ENCODE measurements at regions of chr1 and their contacts with region 1.

Region 1: GRCh38 chr1:40404670-40405462 is 31.3 kb downstream of the SMAP2 start:
- DNase-seq: peak in 5 of 9 experiments; percentile 45 to 88 (median 59)
- ATAC-seq: peak; percentile 81
- H3K4me3 ChIP-seq: no peak overlapping the region
- H3K4me3 Mint-ChIP-seq: peak overlapping the region; percentile 55
- H3K27ac ChIP-seq: peak overlapping the region; percentile 59 to 84
- H3K27ac Mint-ChIP-seq: peak overlapping the region; percentile 96
- H3K4me1 ChIP-seq: peaks cover 56% of the 10 kb centered on the region
- H3K4me1 Mint-ChIP-seq: peaks cover 77% of the 10 kb centered on the region
- H3K27me3 ChIP-seq: no peaks in the 10 kb centered on the region
- H3K27me3 Mint-ChIP-seq: no peaks in the 10 kb centered on the region
- CTCF ChIP-seq: peak; percentile 79

Region 2: GRCh38 chr1:40078512-40079333 is 326.1 kb before region 1 on chr1:
- CTCF ChIA-PET with region 1: interaction called, 6 read pairs
- POLR2A ChIA-PET with region 1: no interaction called
- intact Hi-C with region 1: loop called in 1 of 2 experiments (anchors 2 kb)
- DNase-seq: peak in 8 of 9 experiments; percentile 13 to 77 (median 50)
- ATAC-seq: peak; percentile 89
- H3K4me3 ChIP-seq: no peak overlapping the region
- H3K4me3 Mint-ChIP-seq: no peak overlapping the region
- H3K27ac ChIP-seq: no peak overlapping the region
- H3K27ac Mint-ChIP-seq: peak overlapping the region; percentile 56
- H3K4me1 ChIP-seq: peaks cover 4% of the 10 kb centered on the region
- H3K4me1 Mint-ChIP-seq: peaks cover 11% of the 10 kb centered on the region
- H3K27me3 ChIP-seq: no peaks in the 10 kb centered on the region
- H3K27me3 Mint-ChIP-seq: no peaks in the 10 kb centered on the region
- CTCF ChIP-seq: peak; percentile 88

Region 3: GRCh38 chr1:40153073-40153770 is 251.6 kb before region 1 on chr1:
- CTCF ChIA-PET with region 1: interaction called, 51 read pairs
- POLR2A ChIA-PET with region 1: no interaction called
- intact Hi-C with region 1: loop called (anchors 1 kb)
- DNase-seq: peak in 5 of 9 experiments; percentile 5 to 84 (median 37)
- ATAC-seq: peak; percentile 88
- H3K4me3 ChIP-seq: no peak overlapping the region
- H3K4me3 Mint-ChIP-seq: peak overlapping the region; percentile 20
- H3K27ac ChIP-seq: no peak overlapping the region
- H3K27ac Mint-ChIP-seq: peak overlapping the region; percentile 65
- H3K4me1 ChIP-seq: no peaks in the 10 kb centered on the region
- H3K4me1 Mint-ChIP-seq: peaks cover 9% of the 10 kb centered on the region
- H3K27me3 ChIP-seq: no peaks in the 10 kb centered on the region
- H3K27me3 Mint-ChIP-seq: no peaks in the 10 kb centered on the region
- CTCF ChIP-seq: peak; percentile 76

Region 4: GRCh38 chr1:40281853-40282252 is 123.0 kb before region 1 on chr1:
- CTCF ChIA-PET with region 1: interaction called, 5 read pairs
- POLR2A ChIA-PET with region 1: no interaction called
- intact Hi-C with region 1: loop called in 1 of 2 experiments (anchors 5 kb)
- DNase-seq: no peak
- ATAC-seq: no peak
- H3K4me3 ChIP-seq: no peak overlapping the region
- H3K4me3 Mint-ChIP-seq: no peak overlapping the region
- H3K27ac ChIP-seq: no peak overlapping the region
- H3K27ac Mint-ChIP-seq: no peak overlapping the region
- H3K4me1 ChIP-seq: no peaks in the 10 kb centered on the region
- H3K4me1 Mint-ChIP-seq: no peaks in the 10 kb centered on the region
- H3K27me3 ChIP-seq: no peaks in the 10 kb centered on the region
- H3K27me3 Mint-ChIP-seq: no peaks in the 10 kb centered on the region
- CTCF ChIP-seq: no peak

Region 5: DNA sequence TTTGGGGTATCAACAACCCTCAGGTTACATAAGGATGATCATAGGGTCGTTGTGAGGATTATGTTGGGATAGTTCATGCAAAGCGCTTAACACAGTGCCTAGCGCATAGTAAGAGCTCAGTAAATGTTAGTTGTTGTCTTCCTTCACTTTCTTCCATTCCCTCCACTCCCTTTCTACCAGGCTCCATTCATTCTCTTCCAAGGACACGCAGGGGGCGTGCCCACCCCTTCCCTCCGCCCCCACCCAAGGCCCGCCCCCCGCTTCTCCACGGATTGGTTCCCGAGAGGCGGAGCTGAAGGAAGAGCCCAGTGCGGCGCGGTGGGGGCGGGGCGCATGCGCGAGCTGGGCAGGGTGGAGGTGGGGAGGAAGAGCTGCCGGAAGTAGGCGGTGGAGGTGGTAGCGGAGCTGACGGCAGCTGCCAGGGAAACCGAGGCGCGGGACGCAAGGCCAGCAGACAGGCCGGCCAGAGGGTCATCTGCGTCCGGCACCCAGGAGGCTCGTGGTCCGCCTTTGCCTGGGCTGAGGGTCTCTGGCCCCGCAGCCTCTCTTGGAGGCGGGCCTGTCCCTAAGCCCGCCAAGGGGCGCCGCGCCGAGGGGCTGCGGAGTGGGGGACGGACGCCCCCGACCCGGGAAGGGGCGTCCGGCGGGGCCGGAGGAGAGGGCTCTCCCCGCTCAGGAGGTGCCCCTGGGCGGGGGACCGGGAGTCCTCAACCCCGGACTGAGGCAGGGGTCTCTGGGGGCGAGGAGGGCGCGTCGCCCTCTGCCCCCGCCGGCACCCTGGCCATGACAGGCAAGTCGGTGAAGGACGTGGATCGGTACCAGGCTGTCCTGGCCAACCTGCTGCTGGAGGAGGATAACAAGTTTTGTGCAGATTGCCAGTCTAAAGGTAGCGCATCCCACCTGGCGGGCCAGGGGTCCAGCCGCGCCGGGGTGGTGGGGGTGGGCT is 31.3 kb before region 1 on chr1 and contains the start of gene SMAP2:
- CTCF ChIA-PET with region 1: interaction called, 5 read pairs
- POLR2A ChIA-PET with region 1: interaction called, 3 read pairs
- intact Hi-C with region 1: loop called (anchors 1 to 5 kb)
- DNase-seq: peak; percentile 91 to 98 (median 95)
- ATAC-seq: peak; percentile 80
- H3K4me3 ChIP-seq: peak within 1 kb of the TSS; percentile 81 to 100
- H3K4me3 Mint-ChIP-seq: peak within 1 kb of the TSS; percentile 100
- H3K27ac ChIP-seq: peak within 1 kb of the TSS; percentile 96 to 97
- H3K27ac Mint-ChIP-seq: peak within 1 kb of the TSS; percentile 99
- H3K4me1 ChIP-seq: peaks cover 35% of the 10 kb centered on the region
- H3K4me1 Mint-ChIP-seq: peaks cover 54% of the 10 kb centered on the region
- H3K27me3 ChIP-seq: no peaks in the 10 kb centered on the region
- H3K27me3 Mint-ChIP-seq: no peaks in the 10 kb centered on the region
- CTCF ChIP-seq: no peak
- total RNA-seq, gene SMAP2: 167 to 171 TPM

Region 6: DNA sequence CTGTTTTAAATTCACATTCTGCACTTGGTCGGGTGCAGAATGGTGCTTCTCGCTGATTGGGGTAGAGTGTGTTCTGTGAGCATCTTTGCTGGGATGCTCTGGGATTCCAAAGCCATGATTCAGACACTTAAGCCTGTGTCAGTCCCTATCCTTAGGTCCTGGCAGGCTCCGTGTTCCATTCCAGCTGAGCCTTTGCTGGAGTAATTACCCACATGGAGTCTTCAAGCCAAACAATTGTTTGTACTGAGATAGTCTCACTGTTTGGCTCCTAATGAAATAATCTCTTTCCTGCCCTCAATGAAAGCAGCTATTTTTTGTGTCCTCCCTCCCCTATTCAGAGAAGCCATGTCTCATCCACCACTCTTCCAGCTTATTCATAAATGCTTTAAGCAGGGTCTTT is 12.6 kb before region 1 on chr1:
- CTCF ChIA-PET with region 1: interaction called, 53 read pairs
- POLR2A ChIA-PET with region 1: interaction called, 13 read pairs
- intact Hi-C with region 1: loop called in 1 of 2 experiments (anchors 1 kb)
- DNase-seq: no peak
- ATAC-seq: no peak
- H3K4me3 ChIP-seq: no peak overlapping the region
- H3K4me3 Mint-ChIP-seq: peak overlapping the region; percentile 67
- H3K27ac ChIP-seq: peak overlapping the region; percentile 26 to 83
- H3K27ac Mint-ChIP-seq: peak overlapping the region; percentile 93
- H3K4me1 ChIP-seq: peaks cover 86% of the 10 kb centered on the region
- H3K4me1 Mint-ChIP-seq: peaks cover 94% of the 10 kb centered on the region
- H3K27me3 ChIP-seq: no peaks in the 10 kb centered on the region
- H3K27me3 Mint-ChIP-seq: no peaks in the 10 kb centered on the region
- CTCF ChIP-seq: no peak